ENCODE measurements at regions of chr11 and their contacts with region 1.

Region 1: GRCh38 chr11:126303623-126304456 is at the start of gene DCPS:
- DNase-seq: peak; percentile 81
- ATAC-seq: peak; percentile 94
- H3K4me3 ChIP-seq: peak within 1 kb of the TSS; percentile 96
- H3K27ac ChIP-seq: peak within 1 kb of the TSS; percentile 92
- H3K4me1 ChIP-seq: peaks cover 11% of the 10 kb centered on the region
- H3K27me3 ChIP-seq: no peaks in the 10 kb centered on the region
- CTCF ChIP-seq: no peak
- EP300 ChIP-seq: no peak
- POLR2A ChIP-seq: peak; percentile 99
- RAD21 ChIP-seq: no peak
- polyA plus RNA-seq, gene DCPS: 23.5 to 33.2 TPM

Region 2: DNA sequence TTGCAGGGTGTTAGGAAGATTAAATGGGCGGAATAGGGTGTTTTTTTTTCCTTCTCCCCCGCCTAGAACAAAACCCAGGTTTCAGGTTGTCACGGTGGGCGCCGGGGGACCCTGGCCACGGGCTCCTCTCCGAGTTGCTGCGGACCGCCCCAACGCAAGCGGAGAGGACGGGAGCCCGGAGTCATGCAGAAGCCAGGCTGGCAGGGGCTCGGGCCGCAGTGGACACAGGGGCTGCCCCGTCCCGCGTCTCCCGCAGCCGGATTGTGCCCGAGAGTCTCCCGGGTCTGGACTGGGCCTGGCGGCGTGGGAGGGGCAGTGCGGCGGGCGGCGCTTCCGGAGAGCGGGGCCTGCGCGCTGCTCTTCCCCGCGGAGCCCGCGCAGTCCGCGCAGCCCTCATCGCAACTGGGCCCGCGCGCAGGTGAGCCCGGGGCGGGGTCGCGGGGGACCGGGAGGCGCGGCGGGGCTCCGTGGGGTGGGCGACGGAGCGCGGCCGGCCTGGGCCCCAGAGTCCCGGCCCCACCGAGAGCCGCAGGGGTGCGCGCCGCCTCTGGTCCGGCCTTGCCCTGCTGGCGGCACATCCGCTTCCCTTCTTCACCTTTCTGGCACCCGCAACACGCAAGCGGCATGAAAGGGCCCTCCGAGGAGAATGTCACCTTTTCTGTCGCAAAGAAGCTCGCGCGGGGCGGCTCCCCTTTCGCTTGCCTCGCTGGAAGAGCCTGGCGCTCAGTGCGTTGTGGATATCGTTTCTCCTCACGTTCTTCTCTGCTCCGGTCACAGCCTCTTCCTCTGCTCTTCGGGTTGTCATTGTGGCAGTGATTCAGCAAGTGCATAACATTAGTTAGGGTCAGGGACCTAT is 20.9 kb before region 1 on chr11 and contains the start of gene TIRAP:
- CTCF ChIA-PET with region 1: interaction called, 10 read pairs
- POLR2A ChIA-PET with region 1: interaction called, 9 read pairs
- RAD21 ChIA-PET with region 1: interaction called, 5 read pairs
- SMC1A ChIA-PET with region 1: interaction called, 9 read pairs
- in situ Hi-C with region 1: no loop called
- intact Hi-C with region 1: loop called (anchors 1 kb)
- DNase-seq: no peak
- ATAC-seq: peak; percentile 83
- H3K4me3 ChIP-seq: peak within 1 kb of the TSS; percentile 96
- H3K27ac ChIP-seq: peak within 1 kb of the TSS; percentile 84
- H3K4me1 ChIP-seq: peaks cover 22% of the 10 kb centered on the region
- H3K27me3 ChIP-seq: no peaks in the 10 kb centered on the region
- CTCF ChIP-seq: no peak
- EP300 ChIP-seq: no peak
- POLR2A ChIP-seq: peak; percentile 81
- RAD21 ChIP-seq: no peak
- polyA plus RNA-seq, gene TIRAP: 0.76 to 0.88 TPM

Measured in GM12878 (cell line).